ENCODE measurements at regions of chr1 and their contacts with region 1.

Region 1: GRCh38 chr1:155001675-155002463 is 733 bp upstream of the ZBTB7B start:
- DNase-seq: peak; percentile 95 to 99 (median 97)
- ATAC-seq: peak; percentile 77
- H3K4me3 ChIP-seq: peak overlapping the region; percentile 75 to 99
- H3K4me3 Mint-ChIP-seq: peak overlapping the region; percentile 88
- H3K27ac ChIP-seq: peak overlapping the region; percentile 64 to 90
- H3K27ac Mint-ChIP-seq: peak overlapping the region; percentile 82
- H3K4me1 ChIP-seq: peaks cover 57% of the 10 kb centered on the region
- H3K4me1 Mint-ChIP-seq: peaks cover 59% of the 10 kb centered on the region
- H3K27me3 ChIP-seq: no peaks in the 10 kb centered on the region
- H3K27me3 Mint-ChIP-seq: no peaks in the 10 kb centered on the region
- CTCF ChIP-seq: no peak

Region 2: GRCh38 chr1:153790966-153791647 is 1210.8 kb before region 1 on chr1:
- CTCF ChIA-PET with region 1: no interaction called
- POLR2A ChIA-PET with region 1: no interaction called
- intact Hi-C with region 1: no loop called
- DNase-seq: peak in 2 of 9 experiments; percentile 46 to 59
- ATAC-seq: peak; percentile 72
- H3K4me3 ChIP-seq: no peak overlapping the region
- H3K4me3 Mint-ChIP-seq: no peak overlapping the region
- H3K27ac ChIP-seq: peak overlapping the region in 1 of 2 experiments; percentile 59
- H3K27ac Mint-ChIP-seq: no peak overlapping the region
- H3K4me1 ChIP-seq: peaks cover 25% of the 10 kb centered on the region
- H3K4me1 Mint-ChIP-seq: peaks cover 27% of the 10 kb centered on the region
- H3K27me3 ChIP-seq: no peaks in the 10 kb centered on the region
- H3K27me3 Mint-ChIP-seq: peaks cover 3% of the 10 kb centered on the region
- CTCF ChIP-seq: no peak

Region 3: GRCh38 chr1:154129391-154129970 is 872.4 kb before region 1 on chr1:
- CTCF ChIA-PET with region 1: no interaction called
- POLR2A ChIA-PET with region 1: no interaction called
- intact Hi-C with region 1: no loop called
- DNase-seq: no peak
- ATAC-seq: no peak
- H3K4me3 ChIP-seq: no peak overlapping the region
- H3K4me3 Mint-ChIP-seq: no peak overlapping the region
- H3K27ac ChIP-seq: no peak overlapping the region
- H3K27ac Mint-ChIP-seq: no peak overlapping the region
- H3K4me1 ChIP-seq: no peaks in the 10 kb centered on the region
- H3K4me1 Mint-ChIP-seq: no peaks in the 10 kb centered on the region
- H3K27me3 ChIP-seq: no peaks in the 10 kb centered on the region
- H3K27me3 Mint-ChIP-seq: no peaks in the 10 kb centered on the region
- CTCF ChIP-seq: no peak

Region 4: DNA sequence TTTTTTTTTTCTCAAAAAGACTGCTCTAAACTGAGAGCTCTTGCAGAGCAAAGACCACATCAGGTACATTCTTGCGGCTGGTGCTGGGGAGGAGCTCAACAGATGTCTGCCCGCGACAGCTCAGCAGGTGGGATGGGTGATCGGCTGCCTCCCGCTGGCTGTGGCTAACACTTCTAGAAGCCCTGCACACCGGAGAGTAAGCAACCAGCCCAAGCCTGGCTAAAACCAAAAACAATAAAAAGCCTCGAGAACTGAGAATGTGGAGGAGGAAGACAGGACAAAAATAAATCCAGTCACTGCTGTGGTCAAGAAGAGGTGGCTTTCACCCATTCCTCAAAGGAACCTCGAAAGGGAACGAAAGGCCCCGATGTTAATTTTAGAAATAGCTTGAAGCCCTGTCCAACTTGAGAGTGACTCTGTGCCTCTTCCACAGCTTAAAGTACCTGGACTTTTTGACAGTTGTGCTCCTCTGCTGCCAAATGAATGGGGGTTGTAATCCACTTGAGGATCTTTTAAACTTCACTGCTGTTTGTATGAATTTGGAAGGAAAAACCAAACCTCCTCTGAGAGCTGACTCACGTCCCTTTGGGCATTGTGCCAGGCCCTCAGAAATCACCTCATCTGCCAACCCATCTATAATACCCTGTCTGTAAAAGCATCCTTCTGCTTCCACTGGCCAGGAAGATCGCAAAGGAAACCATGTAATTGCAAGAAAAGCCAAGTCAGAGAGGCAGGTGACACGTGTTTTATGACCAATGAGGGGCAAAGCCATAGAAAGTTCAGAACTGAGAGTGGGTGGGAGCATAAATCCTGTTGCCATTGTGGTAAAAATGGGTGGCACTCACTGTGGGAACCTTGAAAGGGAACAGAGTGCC is 210.3 kb before region 1 on chr1:
- CTCF ChIA-PET with region 1: interaction called, 3 read pairs
- POLR2A ChIA-PET with region 1: no interaction called
- intact Hi-C with region 1: loop called in 1 of 2 experiments (anchors 2 kb)
- DNase-seq: peak; percentile 69 to 97 (median 85)
- ATAC-seq: peak; percentile 93
- H3K4me3 ChIP-seq: peak overlapping the region in 1 of 2 experiments; percentile 5
- H3K4me3 Mint-ChIP-seq: peak overlapping the region; percentile 73
- H3K27ac ChIP-seq: peak overlapping the region; percentile 10 to 25
- H3K27ac Mint-ChIP-seq: peak overlapping the region; percentile 90
- H3K4me1 ChIP-seq: peaks cover 27% of the 10 kb centered on the region
- H3K4me1 Mint-ChIP-seq: peaks cover 39% of the 10 kb centered on the region
- H3K27me3 ChIP-seq: no peaks in the 10 kb centered on the region
- H3K27me3 Mint-ChIP-seq: no peaks in the 10 kb centered on the region
- CTCF ChIP-seq: peak; percentile 27

Region 5: GRCh38 chr1:154961497-154962262 is 40.2 kb before region 1 on chr1 and contains the start of gene PYGO2:
- CTCF ChIA-PET with region 1: interaction called, 18 read pairs
- POLR2A ChIA-PET with region 1: interaction called, 9 read pairs
- intact Hi-C with region 1: loop called (anchors 1 kb)
- DNase-seq: peak; percentile 62 to 90 (median 80)
- ATAC-seq: peak; percentile 75
- H3K4me3 ChIP-seq: peak within 1 kb of the TSS; percentile 68 to 96
- H3K4me3 Mint-ChIP-seq: peak within 1 kb of the TSS; percentile 91
- H3K27ac ChIP-seq: peak within 1 kb of the TSS; percentile 91 to 95
- H3K27ac Mint-ChIP-seq: peak within 1 kb of the TSS; percentile 93
- H3K4me1 ChIP-seq: peaks cover 27% of the 10 kb centered on the region
- H3K4me1 Mint-ChIP-seq: peaks cover 42% of the 10 kb centered on the region
- H3K27me3 ChIP-seq: no peaks in the 10 kb centered on the region
- H3K27me3 Mint-ChIP-seq: no peaks in the 10 kb centered on the region
- CTCF ChIP-seq: peak; percentile 69
- total RNA-seq, gene PYGO2: 25.1 to 26.7 TPM

Region 6: DNA sequence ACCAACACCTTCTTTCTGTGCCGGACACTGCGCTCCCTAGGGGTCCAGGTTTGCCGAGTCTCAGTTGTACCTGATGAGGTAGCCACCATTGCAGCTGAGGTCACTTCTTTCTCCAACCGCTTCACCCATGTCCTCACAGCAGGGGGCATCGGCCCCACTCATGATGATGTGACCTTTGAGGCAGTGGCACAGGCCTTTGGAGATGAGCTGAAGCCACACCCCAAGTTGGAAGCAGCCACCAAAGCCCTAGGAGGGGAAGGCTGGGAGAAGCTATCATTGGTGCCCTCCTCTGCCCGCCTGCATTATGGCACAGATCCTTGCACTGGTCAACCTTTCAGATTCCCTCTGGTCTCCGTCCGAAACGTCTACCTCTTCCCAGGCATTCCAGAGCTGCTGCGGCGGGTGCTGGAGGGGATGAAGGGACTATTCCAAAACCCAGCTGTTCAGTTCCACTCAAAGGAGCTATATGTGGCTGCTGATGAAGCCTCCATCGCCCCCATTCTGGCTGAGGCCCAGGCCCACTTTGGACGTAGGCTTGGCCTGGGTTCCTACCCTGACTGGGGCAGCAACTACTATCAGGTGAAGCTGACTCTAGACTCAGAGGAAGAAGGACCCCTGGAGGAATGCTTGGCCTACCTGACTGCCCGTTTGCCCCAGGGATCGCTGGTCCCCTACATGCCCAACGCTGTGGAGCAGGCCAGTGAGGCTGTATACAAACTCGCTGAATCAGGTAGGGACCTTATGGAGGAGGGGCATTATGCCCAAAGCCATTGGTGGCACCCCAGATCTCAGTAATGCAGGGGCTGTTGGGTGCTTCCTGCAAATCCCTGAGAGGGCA is 13.5 kb before region 1 on chr1:
- CTCF ChIA-PET with region 1: interaction called, 178 read pairs
- POLR2A ChIA-PET with region 1: interaction called, 8 read pairs
- intact Hi-C with region 1: loop called (anchors 1 kb)
- DNase-seq: no peak
- ATAC-seq: no peak
- H3K4me3 ChIP-seq: no peak overlapping the region
- H3K4me3 Mint-ChIP-seq: no peak overlapping the region
- H3K27ac ChIP-seq: no peak overlapping the region
- H3K27ac Mint-ChIP-seq: no peak overlapping the region
- H3K4me1 ChIP-seq: peaks cover 12% of the 10 kb centered on the region
- H3K4me1 Mint-ChIP-seq: peaks cover 26% of the 10 kb centered on the region
- H3K27me3 ChIP-seq: no peaks in the 10 kb centered on the region
- H3K27me3 Mint-ChIP-seq: no peaks in the 10 kb centered on the region
- CTCF ChIP-seq: no peak

Region 7: GRCh38 chr1:155063550-155064110 is 61.8 kb after region 1 on chr1 and contains the start of gene EFNA4:
- CTCF ChIA-PET with region 1: interaction called, 3 read pairs
- POLR2A ChIA-PET with region 1: no interaction called
- intact Hi-C with region 1: loop called (anchors 1 to 2 kb)
- DNase-seq: peak; percentile 59 to 92 (median 83)
- ATAC-seq: peak; percentile 87
- H3K4me3 ChIP-seq: peak within 1 kb of the TSS; percentile 79 to 85
- H3K4me3 Mint-ChIP-seq: peak within 1 kb of the TSS; percentile 88
- H3K27ac ChIP-seq: peak within 1 kb of the TSS in 1 of 2 experiments; percentile 34
- H3K27ac Mint-ChIP-seq: peak within 1 kb of the TSS; percentile 77
- H3K4me1 ChIP-seq: peaks cover 33% of the 10 kb centered on the region
- H3K4me1 Mint-ChIP-seq: peaks cover 36% of the 10 kb centered on the region
- H3K27me3 ChIP-seq: no peaks in the 10 kb centered on the region
- H3K27me3 Mint-ChIP-seq: no peaks in the 10 kb centered on the region
- CTCF ChIP-seq: no peak
- total RNA-seq, gene EFNA4: 1.4 to 1.8 TPM

Region 8: GRCh38 chr1:155167166-155168104 is 165.6 kb after region 1 on chr1:
- CTCF ChIA-PET with region 1: no interaction called
- POLR2A ChIA-PET with region 1: no interaction called
- intact Hi-C with region 1: no loop called
- DNase-seq: peak; percentile 69 to 91 (median 86)
- ATAC-seq: peak; percentile 80
- H3K4me3 ChIP-seq: peak overlapping the region in 1 of 2 experiments; percentile 28
- H3K4me3 Mint-ChIP-seq: peak overlapping the region; percentile 60
- H3K27ac ChIP-seq: no peak overlapping the region
- H3K27ac Mint-ChIP-seq: no peak overlapping the region
- H3K4me1 ChIP-seq: peaks cover 19% of the 10 kb centered on the region
- H3K4me1 Mint-ChIP-seq: peaks cover 22% of the 10 kb centered on the region
- H3K27me3 ChIP-seq: no peaks in the 10 kb centered on the region
- H3K27me3 Mint-ChIP-seq: no peaks in the 10 kb centered on the region
- CTCF ChIP-seq: peak; percentile 64

Region 9: DNA sequence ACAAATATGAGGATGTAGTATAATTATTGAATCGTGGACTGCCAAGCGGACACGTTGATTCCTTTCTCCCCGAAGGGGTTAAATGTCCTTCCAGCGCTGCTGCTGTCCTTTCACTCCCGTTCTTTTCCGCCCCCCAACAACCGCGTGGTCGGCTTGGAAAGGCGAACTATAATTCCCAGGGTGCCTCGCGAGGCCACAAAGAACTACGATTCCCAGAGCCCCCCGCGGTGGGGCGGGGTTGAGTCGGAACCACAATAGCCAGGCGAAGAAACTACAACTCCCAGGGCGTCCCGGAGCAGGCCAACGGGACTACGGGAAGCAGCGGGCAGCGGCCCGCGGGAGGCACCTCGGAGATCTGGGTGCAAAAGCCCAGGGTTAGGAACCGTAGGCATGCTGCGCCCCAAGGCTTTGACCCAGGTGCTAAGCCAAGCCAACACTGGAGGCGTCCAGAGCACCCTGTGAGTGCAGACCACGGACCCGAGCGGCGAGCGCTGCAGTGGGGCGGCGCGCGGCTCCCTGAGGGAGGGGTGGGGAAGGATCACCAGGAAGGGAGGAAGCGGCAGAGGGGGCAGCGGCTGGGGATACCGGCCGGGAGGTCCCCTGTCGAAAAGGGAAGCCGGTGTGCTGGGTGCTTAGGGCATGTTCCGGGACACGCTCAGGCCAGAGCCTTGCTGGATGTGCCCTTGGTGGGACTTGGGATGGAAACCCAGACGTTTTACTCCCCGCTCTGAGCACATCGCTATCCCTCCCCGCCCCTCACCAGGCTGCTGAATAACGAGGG is 1052.8 kb after region 1 on chr1 and contains the start of gene LAMTOR2:
- CTCF ChIA-PET with region 1: no interaction called
- POLR2A ChIA-PET with region 1: no interaction called
- intact Hi-C with region 1: loop called in 1 of 2 experiments (anchors 5 kb)
- DNase-seq: peak; percentile 90 to 98 (median 94)
- ATAC-seq: peak; percentile 78
- H3K4me3 ChIP-seq: peak within 1 kb of the TSS; percentile 85 to 96
- H3K4me3 Mint-ChIP-seq: peak within 1 kb of the TSS; percentile 92
- H3K27ac ChIP-seq: peak within 1 kb of the TSS; percentile 54 to 79
- H3K27ac Mint-ChIP-seq: peak within 1 kb of the TSS; percentile 84
- H3K4me1 ChIP-seq: peaks cover 11% of the 10 kb centered on the region
- H3K4me1 Mint-ChIP-seq: peaks cover 31% of the 10 kb centered on the region
- H3K27me3 ChIP-seq: no peaks in the 10 kb centered on the region
- H3K27me3 Mint-ChIP-seq: no peaks in the 10 kb centered on the region
- CTCF ChIP-seq: no peak
- total RNA-seq, gene LAMTOR2: 6.7 to 8.3 TPM

Measured in CD8-positive, alpha-beta T cell (primary cell).